GM12878 (cell line): ENCODE measurements at regions of chr1 and their contacts with region 1.

Region 1: DNA sequence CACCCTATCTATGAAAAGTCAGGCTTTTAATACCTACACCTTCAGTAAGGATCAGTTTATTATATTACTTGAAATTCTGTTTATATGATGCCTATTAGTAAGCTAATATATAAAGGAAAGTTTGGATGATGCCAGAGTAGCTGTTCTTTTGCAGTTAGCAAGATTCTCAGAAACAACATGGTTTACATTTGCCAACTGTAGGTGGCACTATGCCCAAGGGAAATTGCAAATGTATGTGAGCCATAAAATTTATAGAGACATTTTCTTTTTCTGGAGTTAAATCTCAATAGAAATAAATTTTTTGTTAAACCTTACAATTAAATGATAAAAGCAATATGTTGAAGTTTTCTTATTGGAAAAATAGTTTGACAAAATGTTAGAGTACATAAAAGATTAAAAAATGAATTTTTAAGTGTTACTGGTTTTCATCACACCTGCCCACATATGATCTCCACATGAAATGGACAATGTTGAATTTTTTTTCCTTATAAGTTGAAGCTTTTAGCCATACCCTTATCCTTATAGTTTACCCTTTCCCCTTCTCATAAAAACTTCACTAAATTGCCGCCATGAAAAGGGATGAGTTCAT is 32.1 kb upstream of the EPHX4 start:
- DNase-seq: peak; percentile 1
- ATAC-seq: 0 out of 3 replicates have a peak, but pooled peaks have one; percentile 42
- H3K4me3 ChIP-seq: no peak overlapping the region
- H3K27ac ChIP-seq: no peak overlapping the region
- H3K4me1 ChIP-seq: no peaks in the 10 kb centered on the region
- H3K27me3 ChIP-seq: no peaks in the 10 kb centered on the region
- CTCF ChIP-seq: peak; percentile 43 to 55 (median 54); a peak in 5 of 6 replicates
- EP300 ChIP-seq: no peak
- POLR2A ChIP-seq: no peak
- RAD21 ChIP-seq: peak; percentile 72

Region 2: DNA sequence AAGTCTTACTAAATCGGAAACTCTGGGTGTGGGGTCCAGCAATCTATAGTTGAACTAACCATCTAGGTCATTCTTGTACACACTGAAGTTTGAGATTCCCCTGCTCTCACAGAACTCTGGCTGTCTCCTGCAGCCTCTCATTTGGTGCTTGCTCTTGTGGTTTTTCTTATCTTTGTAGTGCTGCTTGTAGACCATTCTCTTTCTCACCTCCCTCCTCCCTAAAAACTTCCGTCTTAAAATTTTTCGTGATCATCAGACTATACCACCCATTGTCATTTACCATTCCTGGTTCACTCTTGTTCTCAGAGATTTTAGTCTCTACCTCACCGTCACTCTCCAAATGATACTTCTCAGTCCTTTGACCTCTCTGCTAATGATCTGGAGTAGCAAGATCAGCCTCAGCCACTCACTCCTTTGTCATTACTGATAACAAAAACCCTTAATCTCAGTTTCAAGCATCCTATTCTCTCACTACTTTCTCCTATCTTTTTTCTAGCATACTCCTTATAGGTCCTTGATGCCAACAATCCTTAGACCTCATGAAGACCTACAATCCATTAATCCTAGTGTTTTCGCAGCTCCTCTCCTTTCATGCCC is 19.1 kb after region 1 on chr1:
- CTCF ChIA-PET with region 1: interaction called, 13 read pairs
- POLR2A ChIA-PET with region 1: no interaction called
- RAD21 ChIA-PET with region 1: no interaction called
- SMC1A ChIA-PET with region 1: no interaction called
- in situ Hi-C with region 1: no loop called
- intact Hi-C with region 1: no loop called
- DNase-seq: no peak
- ATAC-seq: no peak
- H3K4me3 ChIP-seq: no peak overlapping the region
- H3K27ac ChIP-seq: no peak overlapping the region
- H3K4me1 ChIP-seq: no peaks in the 10 kb centered on the region
- H3K27me3 ChIP-seq: no peaks in the 10 kb centered on the region
- CTCF ChIP-seq: no peak
- EP300 ChIP-seq: no peak
- POLR2A ChIP-seq: no peak
- RAD21 ChIP-seq: no peak

Region 3: DNA sequence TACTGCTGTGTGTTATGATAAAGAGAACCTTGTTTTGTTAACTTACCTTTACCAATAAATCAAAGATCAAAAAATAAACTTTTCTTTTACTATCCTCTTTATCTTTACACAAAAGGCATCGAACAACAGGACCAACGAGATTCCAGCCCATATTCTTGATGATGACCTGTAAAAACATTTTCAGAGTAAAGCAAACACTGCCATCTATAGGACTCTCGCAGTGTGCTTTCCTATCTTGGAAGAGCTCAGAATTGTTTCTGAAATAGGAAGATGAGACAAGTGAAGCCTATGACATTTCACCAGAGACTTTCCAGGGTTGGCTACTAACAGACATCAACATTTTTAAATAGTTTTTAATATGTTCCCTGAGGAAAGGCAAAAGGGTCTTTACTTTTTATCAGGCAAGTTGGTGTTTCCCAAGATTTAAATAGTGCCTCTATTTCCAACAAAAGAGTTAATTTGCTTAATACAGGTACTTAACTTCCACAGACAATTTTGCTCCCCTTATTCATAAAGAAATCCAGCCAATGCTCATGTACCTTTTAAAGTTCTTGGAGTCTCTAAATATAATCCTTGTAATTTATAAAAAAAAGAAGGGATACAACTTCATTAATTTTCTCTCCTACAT is 293.8 kb after region 1 on chr1:
- CTCF ChIA-PET with region 1: interaction called, 14 read pairs
- POLR2A ChIA-PET with region 1: no interaction called
- RAD21 ChIA-PET with region 1: interaction called, 15 read pairs
- SMC1A ChIA-PET with region 1: interaction called, 7 read pairs
- in situ Hi-C with region 1: no loop called
- intact Hi-C with region 1: loop called (anchors 5 kb)
- DNase-seq: no peak
- ATAC-seq: peak; percentile 86
- H3K4me3 ChIP-seq: no peak overlapping the region
- H3K27ac ChIP-seq: no peak overlapping the region
- H3K4me1 ChIP-seq: no peaks in the 10 kb centered on the region
- H3K27me3 ChIP-seq: no peaks in the 10 kb centered on the region
- CTCF ChIP-seq: peak; percentile 54 to 72 (median 56); a peak in 5 of 6 replicates
- EP300 ChIP-seq: no peak
- POLR2A ChIP-seq: no peak
- RAD21 ChIP-seq: peak; percentile 58

Region 4: DNA sequence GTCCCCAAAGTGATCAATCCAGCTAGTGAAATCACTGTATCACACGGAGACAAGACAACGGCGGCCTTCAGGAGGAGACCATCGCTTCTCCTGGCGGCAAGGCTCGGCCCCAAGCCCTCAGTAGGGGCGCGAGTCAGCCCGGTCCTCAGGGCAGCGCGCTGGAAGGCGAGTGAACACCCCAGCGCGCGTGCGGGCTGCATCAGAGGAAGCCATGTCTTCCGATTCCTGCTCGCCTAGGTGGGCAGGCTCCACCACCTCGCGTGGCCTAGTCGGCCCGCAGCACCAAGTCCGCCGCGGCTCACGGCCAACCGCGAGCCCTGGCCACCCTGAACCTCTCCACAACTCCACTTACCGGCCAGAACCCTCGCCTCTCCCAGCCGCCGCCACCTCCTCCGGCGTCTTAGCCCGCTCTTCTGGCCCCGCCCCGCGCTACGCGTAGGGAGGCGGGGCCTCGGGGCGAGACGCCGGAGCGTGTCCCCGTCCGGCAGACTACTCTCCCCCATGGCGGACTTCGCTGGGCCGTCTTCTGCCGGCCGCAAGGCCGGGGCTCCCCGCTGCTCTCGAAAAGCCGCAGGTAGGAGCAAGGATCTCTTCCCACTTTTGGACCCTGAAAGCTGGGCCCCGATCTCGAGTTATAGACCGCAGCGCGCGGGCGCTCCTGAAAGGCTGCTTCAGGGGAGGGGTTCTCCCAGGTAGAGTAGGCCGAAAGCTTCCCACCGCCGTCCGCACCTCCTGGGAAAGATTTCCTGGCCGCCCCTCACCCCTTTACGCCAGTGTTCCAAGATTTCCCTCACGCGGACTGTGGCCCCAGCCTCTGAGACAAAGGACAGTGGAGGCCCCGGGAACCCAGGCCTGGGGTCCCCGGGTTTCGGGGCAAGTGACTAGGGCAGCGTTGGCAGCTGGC is 301.1 kb after region 1 on chr1 and contains the starts of genes GLMN and RPAP2:
- CTCF ChIA-PET with region 1: interaction called, 6 read pairs
- POLR2A ChIA-PET with region 1: no interaction called
- RAD21 ChIA-PET with region 1: no interaction called
- SMC1A ChIA-PET with region 1: no interaction called
- in situ Hi-C with region 1: no loop called
- intact Hi-C with region 1: loop called (anchors 5 kb)
- DNase-seq: peak; percentile 45
- ATAC-seq: peak; percentile 97
- H3K4me3 ChIP-seq: peak within 1 kb of the TSS; percentile 99
- H3K27ac ChIP-seq: peak within 1 kb of the TSS; percentile 93
- H3K4me1 ChIP-seq: no peaks in the 10 kb centered on the region
- H3K27me3 ChIP-seq: no peaks in the 10 kb centered on the region
- CTCF ChIP-seq: 0 out of 6 replicates have a peak, but pooled peaks of 1 of the 3 experiments have one; percentile 13
- EP300 ChIP-seq: no peak
- POLR2A ChIP-seq: peak; percentile 99
- RAD21 ChIP-seq: no peak
- polyA plus RNA-seq, gene GLMN: 18.2 to 20.6 TPM
- polyA plus RNA-seq, gene RPAP2: 20.2 to 24.0 TPM

Region 5: DNA sequence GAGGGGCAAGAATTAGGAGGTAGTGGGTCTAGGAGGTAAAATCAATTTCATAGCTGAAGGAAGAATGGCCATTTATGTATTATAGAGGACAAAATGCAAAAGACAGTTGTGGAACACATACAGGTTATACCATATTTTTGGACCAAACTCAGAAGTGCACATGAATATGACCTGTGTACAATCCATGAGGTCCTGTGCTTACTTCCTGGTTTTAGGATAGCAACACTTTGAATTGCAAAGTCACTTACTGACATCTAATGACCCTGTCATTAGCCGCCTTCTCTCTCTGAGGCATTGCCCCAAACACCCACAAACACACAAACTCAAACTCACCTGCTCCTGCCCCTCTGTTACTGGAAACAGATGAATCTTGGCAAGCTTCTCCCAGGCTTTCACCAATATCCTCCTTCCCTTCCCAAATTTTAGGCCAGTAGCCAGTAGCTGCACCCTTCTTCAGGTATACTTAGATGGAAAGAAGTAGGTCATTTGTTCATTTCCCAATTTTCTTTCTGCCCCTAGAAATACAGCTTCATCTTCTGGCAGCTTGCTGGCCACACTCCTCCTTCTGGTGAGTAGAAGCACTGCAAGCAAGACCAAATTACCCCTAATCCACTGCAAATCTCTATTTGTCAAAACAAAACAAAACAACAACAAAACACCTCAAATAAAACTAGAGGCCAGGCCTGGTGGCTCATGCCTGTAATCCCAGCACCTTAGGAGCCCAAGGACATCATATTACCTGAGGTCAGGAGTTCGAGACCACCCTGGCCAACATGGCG is 820.5 kb after region 1 on chr1:
- CTCF ChIA-PET with region 1: interaction called, 25 read pairs
- POLR2A ChIA-PET with region 1: no interaction called
- RAD21 ChIA-PET with region 1: interaction called, 6 read pairs
- SMC1A ChIA-PET with region 1: interaction called, 7 read pairs
- in situ Hi-C with region 1: no loop called
- intact Hi-C with region 1: loop called (anchors 5 kb)
- DNase-seq: no peak
- ATAC-seq: peak; percentile 90
- H3K4me3 ChIP-seq: no peak overlapping the region
- H3K27ac ChIP-seq: no peak overlapping the region
- H3K4me1 ChIP-seq: no peaks in the 10 kb centered on the region
- H3K27me3 ChIP-seq: no peaks in the 10 kb centered on the region
- CTCF ChIP-seq: peak; percentile 62 to 86 (median 77)
- EP300 ChIP-seq: no peak
- POLR2A ChIP-seq: no peak
- RAD21 ChIP-seq: peak; percentile 73